Astrocyte of the cerebellum (primary cell): ENCODE measurements at regions of chr2 and their contacts with region 1.

Region 1: GRCh38 chr2:9373077-9373875 is 50.1 kb downstream of the ITGB1BP1 start:
- DNase-seq: no peak
- H3K4me3 ChIP-seq: no peak overlapping the region
- CTCF ChIP-seq: no peak

Region 2: GRCh38 chr2:8872821-8873432 is 500.3 kb before region 1 on chr2:
- in situ Hi-C with region 1: loop called (anchors 25 kb)
- DNase-seq: peak; percentile 56
- H3K4me3 ChIP-seq: no peak overlapping the region
- CTCF ChIP-seq: peak; percentile 67